ENCODE measurements at regions of chr1 and their contacts with region 1.

Region 1: GRCh38 chr1:32650752-32651460 is at the start of gene RBBP4:
- DNase-seq: peak; percentile 96
- H3K4me3 Mint-ChIP-seq: peak within 1 kb of the TSS; percentile 97
- H3K27ac Mint-ChIP-seq: peak within 1 kb of the TSS; percentile 100
- H3K4me1 Mint-ChIP-seq: peaks cover 14% of the 10 kb centered on the region
- H3K27me3 Mint-ChIP-seq: no peaks in the 10 kb centered on the region
- CTCF ChIP-seq: no peak
- total RNA-seq, gene RBBP4: 165 and 179 TPM in 2 replicates

Region 2: DNA sequence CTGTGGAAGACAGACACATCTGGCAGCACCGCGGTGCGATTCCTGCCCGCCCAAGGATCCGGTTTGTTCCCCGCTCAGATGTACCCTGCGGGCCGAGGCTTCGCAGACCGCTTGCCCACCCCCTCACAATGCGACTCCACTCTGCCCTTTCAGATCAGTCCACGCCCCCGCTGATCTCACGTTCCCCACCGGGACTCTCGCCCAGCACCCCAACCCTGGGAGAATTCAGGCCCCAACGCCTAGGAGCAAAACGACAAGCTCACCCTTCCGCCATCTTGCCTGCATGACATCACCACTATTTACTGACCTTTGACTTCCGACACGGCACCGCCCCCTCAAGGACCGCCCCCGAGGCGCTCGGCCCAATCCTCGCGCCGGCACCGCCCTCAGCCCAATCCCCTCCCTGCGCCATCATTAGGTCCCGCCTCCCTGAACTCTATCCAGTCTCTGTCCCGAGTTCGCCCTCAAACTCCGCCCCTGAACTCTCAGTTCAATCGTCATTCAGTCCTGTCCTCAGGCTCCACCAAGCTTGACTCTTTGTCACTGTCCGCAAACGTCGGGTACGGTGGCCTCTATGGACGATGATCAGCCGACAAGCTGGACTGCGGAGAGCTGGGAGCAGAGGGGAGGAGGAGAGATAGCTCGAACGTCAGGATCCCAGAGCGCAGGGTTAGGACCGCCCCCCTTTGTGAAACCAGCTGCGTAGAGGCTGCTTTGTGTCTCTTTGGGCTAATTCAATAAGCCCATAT is 256.6 kb before region 1 on chr1 and contains the start of gene BSDC1:
- CTCF ChIA-PET with region 1: interaction called, 4 read pairs
- POLR2A ChIA-PET with region 1: interaction called, 31 read pairs
- intact Hi-C with region 1: no loop called
- DNase-seq: peak; percentile 99
- H3K4me3 Mint-ChIP-seq: peak within 1 kb of the TSS; percentile 91
- H3K27ac Mint-ChIP-seq: peak within 1 kb of the TSS; percentile 97
- H3K4me1 Mint-ChIP-seq: peaks cover 6% of the 10 kb centered on the region
- H3K27me3 Mint-ChIP-seq: no peaks in the 10 kb centered on the region
- CTCF ChIP-seq: no peak
- total RNA-seq, gene BSDC1: 52.6 and 56.2 TPM in 2 replicates

Region 3: GRCh38 chr1:32448773-32449456 is 202.0 kb before region 1 on chr1:
- CTCF ChIA-PET with region 1: no interaction called
- POLR2A ChIA-PET with region 1: interaction called, 5 read pairs
- intact Hi-C with region 1: loop called (anchors 1 kb)
- DNase-seq: peak; percentile 69
- H3K4me3 Mint-ChIP-seq: no peak overlapping the region
- H3K27ac Mint-ChIP-seq: no peak overlapping the region
- H3K4me1 Mint-ChIP-seq: peaks cover 9% of the 10 kb centered on the region
- H3K27me3 Mint-ChIP-seq: peaks cover 13% of the 10 kb centered on the region
- CTCF ChIP-seq: peak; percentile 28

Region 4: DNA sequence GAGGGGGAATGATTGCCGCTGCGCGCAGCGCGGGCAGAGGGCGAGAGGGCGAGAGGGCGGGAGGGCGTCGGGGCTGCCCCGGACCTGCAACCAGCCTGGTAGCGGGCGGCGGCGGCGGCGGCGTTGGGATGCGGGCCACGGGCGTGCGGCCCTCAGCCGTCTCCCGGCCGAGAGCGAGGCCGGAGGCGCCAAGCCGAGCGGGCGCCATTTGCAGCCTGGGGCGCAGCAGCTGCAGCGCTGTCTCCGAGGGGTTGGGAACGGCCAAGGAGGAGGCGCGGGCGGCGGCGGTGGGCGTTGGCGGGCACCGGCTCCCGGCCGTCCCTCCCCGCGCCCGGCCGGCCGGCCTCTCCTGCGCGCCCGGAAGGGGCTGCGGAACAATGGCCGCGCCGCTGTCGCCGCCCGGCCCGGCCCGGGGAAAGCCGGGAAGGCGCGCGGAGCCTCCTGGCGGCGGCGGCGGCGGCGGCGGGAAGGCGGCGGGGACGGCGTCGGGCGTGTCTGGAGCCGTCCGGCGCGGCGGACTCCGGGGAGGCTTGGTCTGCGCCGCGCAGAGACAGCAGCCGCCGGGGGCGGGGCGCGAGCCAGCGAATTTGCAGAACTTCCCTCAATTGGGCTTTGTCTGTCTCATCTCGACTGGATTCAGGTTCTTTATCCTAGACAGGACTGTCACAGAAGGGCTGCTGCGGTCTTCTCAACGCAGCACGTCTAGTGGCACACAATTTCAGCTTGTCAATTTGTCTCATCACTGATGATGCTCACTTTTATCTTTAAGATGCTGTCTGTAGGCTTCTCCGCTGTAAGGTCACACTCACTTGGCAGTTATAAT is 150.3 kb before region 1 on chr1:
- CTCF ChIA-PET with region 1: no interaction called
- POLR2A ChIA-PET with region 1: interaction called, 14 read pairs
- intact Hi-C with region 1: no loop called
- DNase-seq: peak; percentile 67
- H3K4me3 Mint-ChIP-seq: peak overlapping the region; percentile 90
- H3K27ac Mint-ChIP-seq: peak overlapping the region; percentile 91
- H3K4me1 Mint-ChIP-seq: peaks cover 12% of the 10 kb centered on the region
- H3K27me3 Mint-ChIP-seq: no peaks in the 10 kb centered on the region
- CTCF ChIP-seq: no peak

Region 5: GRCh38 chr1:32538887-32539583 is 111.9 kb before region 1 on chr1 and contains the start of gene ZBTB8A:
- CTCF ChIA-PET with region 1: no interaction called
- POLR2A ChIA-PET with region 1: interaction called, 12 read pairs
- intact Hi-C with region 1: no loop called
- DNase-seq: peak; percentile 71
- H3K4me3 Mint-ChIP-seq: peak within 1 kb of the TSS; percentile 82
- H3K27ac Mint-ChIP-seq: peak within 1 kb of the TSS; percentile 87
- H3K4me1 Mint-ChIP-seq: peaks cover 18% of the 10 kb centered on the region
- H3K27me3 Mint-ChIP-seq: no peaks in the 10 kb centered on the region
- CTCF ChIP-seq: no peak
- total RNA-seq, gene ZBTB8A: 11.5 and 15.1 TPM in 2 replicates

Region 6: GRCh38 chr1:32636914-32637645 is 13.8 kb before region 1 on chr1:
- CTCF ChIA-PET with region 1: interaction called, 4 read pairs
- POLR2A ChIA-PET with region 1: interaction called, 19 read pairs
- intact Hi-C with region 1: no loop called
- DNase-seq: peak; percentile 67
- H3K4me3 Mint-ChIP-seq: peak overlapping the region; percentile 66
- H3K27ac Mint-ChIP-seq: peak overlapping the region; percentile 87
- H3K4me1 Mint-ChIP-seq: peaks cover 11% of the 10 kb centered on the region
- H3K27me3 Mint-ChIP-seq: no peaks in the 10 kb centered on the region
- CTCF ChIP-seq: no peak

Region 7: DNA sequence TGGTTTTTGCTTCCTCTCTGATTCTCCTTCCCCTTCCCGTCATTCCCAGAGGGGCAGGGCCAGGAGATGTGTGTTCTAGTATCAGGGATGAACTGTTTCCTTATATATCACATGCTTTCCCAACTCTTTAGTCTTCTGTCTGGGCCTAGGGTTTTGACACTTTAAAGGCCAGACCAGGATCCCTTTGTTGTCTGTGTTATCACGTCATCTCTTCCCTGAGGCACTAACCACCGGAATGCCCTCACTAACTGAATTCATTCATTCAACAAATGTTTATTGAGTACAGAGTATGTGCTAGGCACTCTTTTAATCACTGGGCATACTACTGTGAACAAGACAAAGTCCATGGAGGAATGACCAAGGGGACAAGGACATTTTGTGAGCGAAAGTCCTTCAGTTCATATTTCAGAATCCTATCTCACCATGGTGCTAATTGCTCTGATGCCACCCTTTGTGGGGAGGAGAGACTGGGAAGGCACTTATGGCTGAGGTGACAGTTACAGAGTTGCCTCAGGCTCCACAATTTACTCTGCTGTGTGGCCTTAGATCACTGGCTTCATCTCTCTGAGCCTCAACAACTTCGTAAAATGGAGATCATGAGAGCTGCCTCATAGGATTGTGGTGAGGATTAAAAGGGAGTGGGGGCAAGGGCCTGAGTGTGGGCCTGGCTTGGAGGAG is 593.4 kb after region 1 on chr1:
- CTCF ChIA-PET with region 1: no interaction called
- POLR2A ChIA-PET with region 1: no interaction called
- intact Hi-C with region 1: no loop called
- DNase-seq: peak; percentile 55
- H3K4me3 Mint-ChIP-seq: no peak overlapping the region
- H3K27ac Mint-ChIP-seq: peak overlapping the region; percentile 9
- H3K4me1 Mint-ChIP-seq: peaks cover 12% of the 10 kb centered on the region
- H3K27me3 Mint-ChIP-seq: peaks cover 5% of the 10 kb centered on the region
- CTCF ChIP-seq: no peak

Measured in MCF 10A (cell line).